Common myeloid progenitor, CD34-positive (primary cell): ENCODE measurements at regions of chr14 and their contacts with region 1.

Region 1: GRCh38 chr14:22472935-22473854 is 115.8 kb downstream of the DAD1 start:
- DNase-seq: peak; percentile 82 to 91 (median 87)
- H3K4me3 ChIP-seq: no peak overlapping the region
- H3K27ac ChIP-seq: no peak overlapping the region
- H3K4me1 ChIP-seq: peaks cover 7 to 52% (median 16%) of the 10 kb centered on the region in 4 experiments
- H3K27me3 ChIP-seq: no peaks in the 10 kb centered on the region

Region 2: DNA sequence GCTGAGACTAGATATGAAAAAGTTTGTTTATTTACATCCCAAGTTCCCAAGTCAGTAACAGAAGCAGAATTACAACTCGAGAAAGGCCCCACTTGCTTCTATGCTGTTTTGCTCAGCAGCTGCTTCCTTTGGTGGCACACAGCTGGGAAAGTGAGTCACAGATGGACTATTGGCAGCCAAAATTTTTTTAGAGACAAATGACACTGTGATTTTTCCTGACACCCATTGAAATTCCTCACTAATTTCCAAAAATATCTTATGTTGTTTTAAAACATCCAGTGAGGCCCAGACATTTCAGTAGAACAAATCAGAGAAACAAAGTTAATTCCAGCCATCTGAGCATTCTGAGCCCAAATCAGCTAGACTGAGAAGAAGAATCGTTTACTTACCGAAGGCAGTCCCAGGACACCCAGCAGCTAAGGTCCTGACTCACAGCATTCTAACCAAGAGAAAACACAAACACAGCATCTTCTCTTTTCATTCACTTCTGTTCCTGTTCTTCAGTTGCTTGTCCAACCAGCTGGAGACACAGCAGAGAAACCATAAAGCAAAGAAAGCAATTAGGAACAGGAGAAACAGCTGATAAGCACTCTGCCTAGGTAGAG is 72.4 kb before region 1 on chr14:
- CTCF ChIA-PET with region 1: interaction called, 366 read pairs
- POLR2A ChIA-PET with region 1: no interaction called
- DNase-seq: no peak
- H3K4me3 ChIP-seq: no peak overlapping the region
- H3K27ac ChIP-seq: no peak overlapping the region
- H3K4me1 ChIP-seq: peaks cover 0 to 2% (median 0%) of the 10 kb centered on the region in 4 experiments
- H3K27me3 ChIP-seq: no peaks in the 10 kb centered on the region

Region 3: GRCh38 chr14:22412926-22413411 is 60.2 kb before region 1 on chr14:
- CTCF ChIA-PET with region 1: interaction called, 21 read pairs
- POLR2A ChIA-PET with region 1: no interaction called
- DNase-seq: no peak
- H3K4me3 ChIP-seq: no peak overlapping the region
- H3K27ac ChIP-seq: no peak overlapping the region
- H3K4me1 ChIP-seq: peaks cover 6 to 28% (median 12%) of the 10 kb centered on the region in 4 experiments
- H3K27me3 ChIP-seq: no peaks in the 10 kb centered on the region

Region 4: GRCh38 chr14:22432348-22432976 is 40.7 kb before region 1 on chr14:
- CTCF ChIA-PET with region 1: interaction called, 75 read pairs
- POLR2A ChIA-PET with region 1: no interaction called
- DNase-seq: peak; percentile 88 to 92 (median 91)
- H3K4me3 ChIP-seq: peak overlapping the region in 5 of 7 experiments; percentile 43 to 79 (median 61)
- H3K27ac ChIP-seq: peak overlapping the region in 1 of 2 experiments; percentile 62
- H3K4me1 ChIP-seq: peaks cover 40 to 93% (median 81%) of the 10 kb centered on the region in 4 experiments
- H3K27me3 ChIP-seq: no peaks in the 10 kb centered on the region

Region 5: GRCh38 chr14:22502551-22502950 is 29.4 kb after region 1 on chr14:
- CTCF ChIA-PET with region 1: no interaction called
- POLR2A ChIA-PET with region 1: no interaction called
- DNase-seq: no peak
- H3K4me3 ChIP-seq: no peak overlapping the region
- H3K27ac ChIP-seq: no peak overlapping the region
- H3K4me1 ChIP-seq: peaks cover 0 to 5% (median 2%) of the 10 kb centered on the region in 4 experiments
- H3K27me3 ChIP-seq: peaks cover 0 to 2% (median 2%) of the 10 kb centered on the region in 5 experiments

Region 6: GRCh38 chr14:22551605-22551997 is 78.4 kb after region 1 on chr14:
- CTCF ChIA-PET with region 1: interaction called, 17 read pairs
- POLR2A ChIA-PET with region 1: interaction called, 3 read pairs
- DNase-seq: no peak
- H3K4me3 ChIP-seq: no peak overlapping the region
- H3K27ac ChIP-seq: no peak overlapping the region
- H3K4me1 ChIP-seq: peaks cover 9 to 54% (median 45%) of the 10 kb centered on the region in 4 experiments
- H3K27me3 ChIP-seq: no peaks in the 10 kb centered on the region

Region 7: GRCh38 chr14:22606380-22606779 is 133.2 kb after region 1 on chr14:
- CTCF ChIA-PET with region 1: no interaction called
- POLR2A ChIA-PET with region 1: no interaction called
- DNase-seq: no peak
- H3K4me3 ChIP-seq: no peak overlapping the region
- H3K27ac ChIP-seq: no peak overlapping the region
- H3K4me1 ChIP-seq: peaks cover 0 to 9% (median 4%) of the 10 kb centered on the region in 4 experiments
- H3K27me3 ChIP-seq: no peaks in the 10 kb centered on the region